ENCODE measurements at regions of chr15 and their contacts with region 1.

Region 1: DNA sequence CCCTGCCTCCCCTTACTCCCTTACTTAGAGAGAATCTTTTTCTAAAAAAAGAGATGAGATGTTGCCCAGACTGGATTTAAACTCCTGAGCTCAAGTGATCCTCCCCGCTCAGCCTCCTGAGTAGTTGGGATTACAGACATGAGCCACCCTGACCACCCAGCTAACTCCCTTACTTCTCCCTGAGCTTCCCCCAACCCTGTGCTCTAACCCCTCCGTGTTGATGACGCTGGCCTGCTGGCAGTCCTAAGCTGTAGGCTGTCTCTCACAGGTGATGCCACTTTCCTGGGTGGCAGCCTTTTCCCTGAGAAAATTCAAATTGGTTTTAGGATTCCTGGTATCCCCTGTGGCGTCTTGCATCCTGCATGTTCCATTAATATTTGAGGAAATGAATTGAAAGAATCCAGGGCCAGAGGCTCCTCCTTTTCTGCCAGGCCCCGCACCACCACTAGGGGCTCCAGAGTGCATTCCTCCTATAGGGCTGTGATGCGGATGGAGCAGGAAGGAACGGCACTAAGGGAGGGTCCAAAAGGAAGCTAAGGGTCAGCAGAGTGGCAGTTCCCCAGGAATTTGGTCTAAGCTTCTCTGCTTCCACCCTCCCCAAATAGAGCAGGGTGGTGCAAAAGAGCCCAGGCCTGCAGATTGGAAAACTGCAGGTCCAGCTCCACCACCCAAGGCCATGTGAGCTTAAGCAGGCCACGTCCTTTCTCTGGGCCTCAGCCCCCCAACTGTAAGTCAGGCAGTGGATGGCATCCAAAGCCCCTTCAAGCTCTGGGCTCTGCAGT is 101.1 kb downstream of the DAPK2 start:
- DNase-seq: peak; percentile 82 to 87 (median 84)
- ATAC-seq: peak; percentile 97
- H3K4me3 ChIP-seq: no peak overlapping the region
- H3K27ac ChIP-seq: no peak overlapping the region
- H3K4me1 ChIP-seq: peaks cover 4 to 8% of the 10 kb centered on the region in 2 experiments; a peak in 3 of 5 replicates
- H3K27me3 ChIP-seq: no peaks in the 10 kb centered on the region
- CTCF ChIP-seq: peak; percentile 86 to 96 (median 94)
- EP300 ChIP-seq: 0 out of 2 replicates have a peak, but pooled peaks have one; percentile 12
- POLR2A ChIP-seq: no peak
- RAD21 ChIP-seq: peak; percentile 62 to 64

Region 2: GRCh38 chr15:63826528-63826927 is 118.7 kb before region 1 on chr15:
- CTCF ChIA-PET with region 1: no interaction called
- POLR2A ChIA-PET with region 1: interaction called, 3 read pairs
- in situ Hi-C with region 1: no loop called
- intact Hi-C with region 1: loop called (anchors 5 kb)
- DNase-seq: peak in 1 of 4 experiments; percentile 66
- ATAC-seq: peak; percentile 51; the same call in 1 of the 3 replicates
- H3K4me3 ChIP-seq: no peak overlapping the region
- H3K27ac ChIP-seq: peak overlapping the region; percentile 53; the same call in 1 of the 3 replicates
- H3K4me1 ChIP-seq: peaks cover 16 to 23% of the 10 kb centered on the region in 2 experiments
- H3K27me3 ChIP-seq: no peaks in the 10 kb centered on the region
- CTCF ChIP-seq: peak; percentile 17 to 53 (median 25); a peak in 3 of 6 replicates
- EP300 ChIP-seq: no peak
- POLR2A ChIP-seq: no peak
- RAD21 ChIP-seq: peak; percentile 41 to 47

Region 3: GRCh38 chr15:64187396-64188191 is 242.4 kb after region 1 on chr15:
- CTCF ChIA-PET with region 1: no interaction called
- POLR2A ChIA-PET with region 1: no interaction called
- in situ Hi-C with region 1: no loop called
- intact Hi-C with region 1: no loop called
- DNase-seq: no peak
- ATAC-seq: no peak
- H3K4me3 ChIP-seq: no peak overlapping the region
- H3K27ac ChIP-seq: no peak overlapping the region
- H3K4me1 ChIP-seq: peaks cover 0 to 4% of the 10 kb centered on the region in 2 experiments; a peak in 1 of 5 replicates
- H3K27me3 ChIP-seq: no peaks in the 10 kb centered on the region
- CTCF ChIP-seq: no peak
- EP300 ChIP-seq: no peak
- POLR2A ChIP-seq: no peak
- RAD21 ChIP-seq: no peak